Motor neuron (in vitro differentiated cells): ENCODE measurements at regions of chr3 and their contacts with region 1.

Region 1: DNA sequence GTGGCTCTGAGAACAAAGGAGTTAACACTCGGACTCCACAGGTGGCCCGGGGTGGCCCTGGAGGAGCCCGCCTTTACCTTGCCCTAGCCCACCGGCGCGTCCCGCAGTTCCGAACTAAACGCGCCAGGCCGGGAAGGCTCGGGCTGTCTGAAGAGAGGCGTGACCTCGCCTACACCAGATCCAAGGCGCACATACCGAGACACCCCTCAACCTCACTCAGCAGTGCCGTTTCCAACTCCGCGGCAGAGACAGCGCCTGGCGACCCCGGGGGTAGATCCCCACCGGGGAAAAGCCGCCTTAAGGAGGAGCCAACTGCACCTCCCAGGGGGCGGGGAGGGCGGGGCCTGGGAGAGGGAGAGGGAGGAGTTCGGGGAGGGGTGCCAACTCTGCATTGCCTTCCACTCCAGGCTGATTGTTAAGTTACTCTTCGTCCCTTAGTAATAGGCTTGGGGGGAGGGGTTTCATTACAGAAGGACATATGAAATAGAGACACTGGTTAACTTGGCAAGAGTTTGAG is at the start of gene DLG1:
- ATAC-seq: peak; percentile 55 to 74 (median 62)
- H3K4me3 ChIP-seq: peak within 1 kb of the TSS; percentile 59 to 94 (median 78)
- H3K27ac ChIP-seq: peak within 1 kb of the TSS; percentile 45 to 91
- H3K4me1 ChIP-seq: peaks cover 0 to 10% of the 10 kb centered on the region in 2 donors
- total RNA-seq, gene DLG1: 20.3 to 109 (median 47.7) TPM

Region 2: DNA sequence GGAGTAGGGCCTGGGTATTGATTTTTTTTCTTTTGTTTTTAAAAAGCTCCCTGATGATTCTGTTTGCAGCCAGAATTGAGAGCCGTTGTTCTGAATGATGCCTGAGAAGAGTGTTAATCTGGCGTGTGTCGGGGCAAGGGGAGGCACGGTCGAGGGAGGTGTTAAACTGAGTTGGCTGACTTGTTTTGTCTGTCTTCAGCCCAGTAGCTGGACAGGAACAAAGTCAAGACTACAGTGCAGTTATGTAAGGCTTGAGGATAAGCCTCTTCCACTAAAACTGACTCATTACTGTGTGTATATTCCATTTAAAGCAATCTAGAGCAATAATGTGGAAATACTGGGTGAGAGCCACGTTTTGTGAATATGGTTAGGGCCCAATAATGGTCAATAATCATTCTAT is 119.0 kb after region 1 on chr3:
- in situ Hi-C with region 1: no loop called
- ATAC-seq: peak in 2 of 8 experiments; percentile 17 to 85
- H3K4me3 ChIP-seq: no peak overlapping the region
- H3K27ac ChIP-seq: no peak overlapping the region
- H3K4me1 ChIP-seq: peaks cover 11 to 12% of the 10 kb centered on the region in 2 donors

Region 3: GRCh38 chr3:197456261-197457091 is 158.1 kb after region 1 on chr3:
- in situ Hi-C with region 1: loop called in 1 of 9 experiments (anchors 25 kb)
- ATAC-seq: peak; percentile 87 to 97 (median 92)
- H3K4me3 ChIP-seq: peak overlapping the region; percentile 7 to 32 (median 28)
- H3K27ac ChIP-seq: peak overlapping the region; percentile 61 to 81
- H3K4me1 ChIP-seq: peaks cover 6 to 16% of the 10 kb centered on the region in 2 donors

Region 4: DNA sequence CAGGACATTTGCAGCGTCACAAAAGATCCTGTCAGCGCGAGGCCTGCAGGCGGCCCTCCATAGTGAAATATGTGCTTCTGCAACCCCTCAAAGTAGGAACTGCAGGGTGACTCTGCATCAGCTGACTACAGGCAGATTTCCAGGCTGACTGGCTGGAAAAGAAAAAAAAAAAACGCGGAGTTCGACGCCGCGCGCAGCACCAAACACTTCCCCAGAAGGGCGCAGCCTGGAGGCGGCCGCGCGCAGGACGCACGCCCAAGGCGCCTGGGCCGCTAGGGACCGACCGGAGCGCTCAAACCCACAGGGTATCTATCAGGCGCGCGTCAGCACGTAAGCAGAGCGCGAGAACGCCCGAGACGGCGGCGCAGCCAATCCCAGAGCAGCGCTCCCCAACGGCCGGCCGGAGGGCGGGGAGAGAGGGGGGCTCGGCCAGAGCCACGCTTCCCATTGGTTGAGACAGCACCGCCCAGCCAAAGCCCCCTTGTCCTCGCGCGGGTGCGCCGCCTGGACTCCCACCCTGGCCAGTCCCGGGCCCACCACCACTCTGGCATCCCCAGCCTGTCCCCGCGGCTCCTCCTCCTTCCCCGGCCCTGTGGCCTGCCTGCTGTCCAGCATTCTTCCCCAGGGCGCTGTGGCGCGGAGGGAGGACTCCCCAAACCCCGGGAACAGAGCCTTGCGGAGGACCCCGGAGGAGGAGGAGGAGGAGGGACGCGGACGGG is 256.3 kb after region 1 on chr3:
- in situ Hi-C with region 1: no loop called
- ATAC-seq: peak; percentile 92 to 96 (median 94)
- H3K4me3 ChIP-seq: peak overlapping the region; percentile 66 to 74 (median 72)
- H3K27ac ChIP-seq: peak overlapping the region; percentile 80 to 81
- H3K4me1 ChIP-seq: peaks cover 8 to 12% of the 10 kb centered on the region in 2 donors